Tibial artery (tissue), 4 donors: ENCODE measurements at regions of chr9 and their contacts with region 1.

Region 1: GRCh38 chr9:27835286-27835685 is 262.0 kb upstream of the C9orf72 start:
- DNase-seq: no peak
- H3K4me3 ChIP-seq: no peak overlapping the region
- H3K27ac ChIP-seq: no peak overlapping the region
- H3K4me1 ChIP-seq: no peaks in the 10 kb centered on the region
- H3K27me3 ChIP-seq: peaks cover 0 to 4% of the 10 kb centered on the region in 2 donors
- CTCF ChIP-seq: no peak

Region 2: DNA sequence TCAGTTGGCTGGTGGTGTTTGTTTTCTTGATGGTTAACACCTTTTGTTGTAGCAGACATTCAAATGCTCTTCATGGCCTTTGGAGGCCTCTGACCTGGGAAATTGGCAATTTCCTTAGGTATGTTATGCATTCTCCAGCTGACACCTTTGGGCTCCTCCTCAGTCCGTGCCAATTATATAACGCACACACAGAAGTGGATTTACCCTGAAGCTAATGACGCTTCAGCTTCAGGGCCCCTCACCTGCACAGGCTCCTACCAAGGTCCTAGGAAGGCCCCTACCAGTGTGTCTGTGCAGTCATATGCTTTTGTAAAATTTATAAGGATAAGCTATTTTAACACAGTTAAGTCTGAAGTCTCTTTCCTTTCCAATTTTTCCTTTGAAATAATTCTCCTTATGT is 34.6 kb after region 1 on chr9:
- intact Hi-C with region 1: loop called (anchors 2 kb)
- DNase-seq: no peak
- H3K4me3 ChIP-seq: no peak overlapping the region
- H3K27ac ChIP-seq: no peak overlapping the region
- H3K4me1 ChIP-seq: no peaks in the 10 kb centered on the region
- H3K27me3 ChIP-seq: no peaks in the 10 kb centered on the region
- CTCF ChIP-seq: no peak